ENCODE measurements at regions of chr13 and their contacts with region 1.

Region 1: GRCh38 chr13:113452942-113453901 is at the start of gene ADPRHL1:
- DNase-seq: peak; percentile 91 to 96
- ATAC-seq: peak; percentile 88 to 91
- H3K4me3 ChIP-seq: peak within 1 kb of the TSS; percentile 47 to 63 (median 60)
- H3K27ac ChIP-seq: peak within 1 kb of the TSS; percentile 92 to 97 (median 94)
- H3K4me1 ChIP-seq: peaks cover 31 to 33% of the 10 kb centered on the region in 2 donors
- H3K27me3 ChIP-seq: no peaks in the 10 kb centered on the region
- CTCF ChIP-seq: peak in 1 of 5 experiments; percentile 9
- POLR2A ChIP-seq: peak; percentile 91 to 98
- total RNA-seq, gene ADPRHL1: 224 to 354 (median 295) TPM

Region 2: DNA sequence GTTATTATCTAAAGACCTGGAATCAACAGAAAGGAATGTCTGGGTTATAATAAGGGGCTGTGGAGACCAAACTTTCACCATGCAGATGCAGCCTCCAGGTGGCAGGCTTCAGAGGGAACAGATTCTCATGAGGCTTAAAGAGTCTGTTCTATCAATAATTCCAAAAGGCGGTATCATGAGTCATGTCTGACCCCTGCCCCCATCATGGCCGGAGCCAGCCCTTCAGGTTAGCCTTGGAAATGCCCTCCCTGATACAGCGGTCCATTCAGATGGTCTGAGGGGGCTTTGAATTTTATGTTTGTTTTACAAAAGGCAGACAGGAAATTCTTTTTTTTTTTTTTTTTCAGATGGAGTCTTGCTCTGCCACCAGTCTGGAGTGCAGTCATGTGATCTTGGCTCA is 177.8 kb before region 1 on chr13:
- in situ Hi-C with region 1: no loop called
- intact Hi-C with region 1: loop called (anchors 5 kb)
- DNase-seq: peak in 1 of 2 donors; percentile 37
- ATAC-seq: peak; percentile 40 to 71
- H3K4me3 ChIP-seq: no peak overlapping the region
- H3K27ac ChIP-seq: no peak overlapping the region
- H3K4me1 ChIP-seq: peaks cover 0 to 7% of the 10 kb centered on the region in 2 donors
- H3K27me3 ChIP-seq: no peaks in the 10 kb centered on the region
- CTCF ChIP-seq: peak; percentile 50 to 65 (median 59)
- POLR2A ChIP-seq: no peak

Region 3: GRCh38 chr13:113410472-113411201 is 42.6 kb before region 1 on chr13:
- in situ Hi-C with region 1: no loop called
- intact Hi-C with region 1: loop called (anchors 2 kb)
- DNase-seq: peak; percentile 92 to 96
- ATAC-seq: peak; percentile 64 to 65
- H3K4me3 ChIP-seq: peak overlapping the region; percentile 54 to 76 (median 64)
- H3K27ac ChIP-seq: peak overlapping the region; percentile 99 to 100 (median 100)
- H3K4me1 ChIP-seq: peaks cover 55 to 56% of the 10 kb centered on the region in 2 donors
- H3K27me3 ChIP-seq: no peaks in the 10 kb centered on the region
- CTCF ChIP-seq: no peak
- POLR2A ChIP-seq: peak; percentile 76 to 85

Region 4: GRCh38 chr13:113490496-113491417 is 37.5 kb after region 1 on chr13 and contains the start of gene DCUN1D2:
- in situ Hi-C with region 1: no loop called
- intact Hi-C with region 1: loop called (anchors 2 kb)
- DNase-seq: peak; percentile 87 to 94
- ATAC-seq: peak; percentile 76 to 81
- H3K4me3 ChIP-seq: peak within 1 kb of the TSS; percentile 80 to 91 (median 88)
- H3K27ac ChIP-seq: peak within 1 kb of the TSS; percentile 89 to 94 (median 92)
- H3K4me1 ChIP-seq: peaks cover 58 to 70% of the 10 kb centered on the region in 2 donors
- H3K27me3 ChIP-seq: no peaks in the 10 kb centered on the region
- CTCF ChIP-seq: peak in 1 of 5 experiments; percentile 28
- POLR2A ChIP-seq: peak; percentile 94
- total RNA-seq, gene DCUN1D2: 45.1 to 63.6 (median 56.0) TPM

Region 5: DNA sequence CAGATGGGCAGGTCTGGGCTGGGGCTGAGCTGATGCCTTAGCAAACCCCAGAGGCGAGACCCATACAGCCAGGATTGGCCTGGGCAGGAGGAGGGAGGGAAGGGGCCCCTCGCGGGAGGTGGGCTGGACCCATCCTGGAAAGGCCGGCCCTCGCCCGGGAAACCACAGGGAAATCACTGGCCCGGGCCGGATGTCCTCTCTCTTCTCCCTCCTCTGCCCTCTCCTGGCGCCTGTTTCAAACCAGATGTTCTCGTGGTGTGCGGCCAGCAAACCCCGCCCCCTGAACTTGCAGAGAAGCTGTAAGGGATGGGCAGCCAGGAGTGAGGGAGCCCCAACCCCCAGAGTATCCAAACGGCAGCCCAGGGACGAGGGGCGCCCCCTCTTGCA is 348.9 kb after region 1 on chr13:
- in situ Hi-C with region 1: no loop called
- intact Hi-C with region 1: no loop called
- DNase-seq: no peak
- ATAC-seq: no peak
- H3K4me3 ChIP-seq: no peak overlapping the region
- H3K27ac ChIP-seq: no peak overlapping the region
- H3K4me1 ChIP-seq: no peaks in the 10 kb centered on the region
- H3K27me3 ChIP-seq: no peaks in the 10 kb centered on the region
- CTCF ChIP-seq: no peak
- POLR2A ChIP-seq: no peak

Measured in gastrocnemius medialis (tissue), 4 donors.